ENCODE measurements at regions of chr6 and their contacts with region 1.

Region 1: DNA sequence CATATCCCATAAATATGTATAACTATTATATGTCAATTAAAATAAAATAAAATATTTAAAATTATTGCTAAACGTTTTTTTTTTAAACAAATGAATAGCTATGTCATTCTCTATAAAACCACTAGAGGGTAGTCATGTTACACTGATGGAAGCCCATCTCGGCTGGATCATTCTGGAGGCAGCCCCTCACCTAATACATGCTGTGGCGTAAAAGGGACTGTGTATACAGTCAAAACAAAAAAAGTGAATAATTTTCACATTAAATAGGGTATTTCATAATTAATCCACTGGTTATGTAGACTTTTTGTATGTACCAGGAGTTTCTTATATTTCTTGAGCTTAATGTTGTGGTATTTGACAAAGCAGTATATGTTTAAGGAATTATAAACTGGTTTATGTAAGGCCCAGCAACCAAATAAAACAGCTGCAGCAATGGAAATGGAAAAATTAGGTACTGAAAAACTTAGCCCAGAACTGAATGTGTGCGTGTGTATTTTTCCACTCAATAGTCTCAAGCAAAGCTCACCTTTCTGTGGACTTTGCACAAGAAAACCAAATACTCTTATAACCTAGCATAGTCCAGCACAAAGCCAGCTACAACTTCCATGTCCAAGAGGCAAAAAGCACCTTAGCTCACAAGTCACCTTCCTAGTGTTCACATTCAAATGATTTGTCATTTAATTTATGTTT is 81.7 kb downstream of the COL9A1 start:
- DNase-seq: no peak
- ATAC-seq: peak; percentile 71
- H3K4me3 ChIP-seq: no peak overlapping the region
- H3K27ac ChIP-seq: no peak overlapping the region
- H3K4me1 ChIP-seq: no peaks in the 10 kb centered on the region
- H3K27me3 ChIP-seq: peaks cover 52% of the 10 kb centered on the region
- CTCF ChIP-seq: peak; percentile 51 to 61 (median 55); a peak in 4 of 6 replicates
- POLR2A ChIP-seq: no peak
- RAD21 ChIP-seq: peak; percentile 75

Region 2: DNA sequence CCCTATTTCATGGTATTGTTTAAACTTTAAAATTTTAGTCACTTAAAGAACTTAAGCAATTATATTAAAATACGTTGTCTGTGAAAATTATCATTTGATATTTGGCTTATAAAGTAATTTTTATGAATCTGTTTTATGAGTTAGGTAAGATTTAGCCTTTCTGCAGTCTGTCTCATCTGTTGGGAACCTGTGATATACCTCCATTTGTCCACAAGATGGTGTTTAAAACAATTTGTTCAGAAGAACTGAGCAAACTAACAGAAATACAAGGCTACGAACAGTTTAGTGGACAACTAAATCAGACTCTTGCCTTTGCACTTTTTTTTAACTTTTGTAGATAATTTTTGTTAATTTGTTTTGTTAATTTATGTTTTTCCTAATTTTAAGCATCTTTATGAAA is 10.7 kb before region 1 on chr6:
- CTCF ChIA-PET with region 1: interaction called, 19 read pairs
- POLR2A ChIA-PET with region 1: no interaction called
- RAD21 ChIA-PET with region 1: no interaction called
- intact Hi-C with region 1: no loop called
- DNase-seq: no peak
- ATAC-seq: peak; percentile 59; the same call in 1 of the 2 replicates
- H3K4me3 ChIP-seq: no peak overlapping the region
- H3K27ac ChIP-seq: no peak overlapping the region
- H3K4me1 ChIP-seq: no peaks in the 10 kb centered on the region
- H3K27me3 ChIP-seq: peaks cover 71% of the 10 kb centered on the region
- CTCF ChIP-seq: peak; percentile 6 to 40 (median 21); a peak in 3 of 6 replicates
- POLR2A ChIP-seq: no peak
- RAD21 ChIP-seq: no peak

Region 3: DNA sequence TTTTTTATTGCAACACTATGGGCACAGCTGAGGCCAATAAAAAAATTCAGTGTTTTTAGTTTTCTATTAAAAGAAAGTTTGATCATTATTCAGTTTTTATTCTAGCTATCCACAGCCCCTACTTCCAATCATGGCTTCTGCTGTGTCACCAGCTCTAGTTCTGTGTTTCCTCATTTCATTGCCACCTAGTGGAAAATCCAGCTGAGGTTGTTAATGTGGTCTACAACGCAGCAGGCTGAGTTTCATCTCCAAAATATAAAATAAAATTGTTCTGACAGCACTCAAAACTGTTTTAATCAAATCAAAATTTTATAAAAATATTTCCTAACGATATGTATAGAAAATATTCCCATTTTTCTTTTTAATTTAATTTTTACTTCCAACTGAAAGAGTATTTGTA is 68.1 kb after region 1 on chr6:
- CTCF ChIA-PET with region 1: interaction called, 13 read pairs
- POLR2A ChIA-PET with region 1: no interaction called
- RAD21 ChIA-PET with region 1: no interaction called
- intact Hi-C with region 1: no loop called
- DNase-seq: no peak
- ATAC-seq: no peak
- H3K4me3 ChIP-seq: no peak overlapping the region
- H3K27ac ChIP-seq: no peak overlapping the region
- H3K4me1 ChIP-seq: no peaks in the 10 kb centered on the region
- H3K27me3 ChIP-seq: peaks cover 82% of the 10 kb centered on the region
- CTCF ChIP-seq: no peak; a peak in 1 of 6 replicates
- POLR2A ChIP-seq: no peak
- RAD21 ChIP-seq: 0 out of 2 replicates have a peak, but pooled peaks have one; percentile 9

Region 4: DNA sequence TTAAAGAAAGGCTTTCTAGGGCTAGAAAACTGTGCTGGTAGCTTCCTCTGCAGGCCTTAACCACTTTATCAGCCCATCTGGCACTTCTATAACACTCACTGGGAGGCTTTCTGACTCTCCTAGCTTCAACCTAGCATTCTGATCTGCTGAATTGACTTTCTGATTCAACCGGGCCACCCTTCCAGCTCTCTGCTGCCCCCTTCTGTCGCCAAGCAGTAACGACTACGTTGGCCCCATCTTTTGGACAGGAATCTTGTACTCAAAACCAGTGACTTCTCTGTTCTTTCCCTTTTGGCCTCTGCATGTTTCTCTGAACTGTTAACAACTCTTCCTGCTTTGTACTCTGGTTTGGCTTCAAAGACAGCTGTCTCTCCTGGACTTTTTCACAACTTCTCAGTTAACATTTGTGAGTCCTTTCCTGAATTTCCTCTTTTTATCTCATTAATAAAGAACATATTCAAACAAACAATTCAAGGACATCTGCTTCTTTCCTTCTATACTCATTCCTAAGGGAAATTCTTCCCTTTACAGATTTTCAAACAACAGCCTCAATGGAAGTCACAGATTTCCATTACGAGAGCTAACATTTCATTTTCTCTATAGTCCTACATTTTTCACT is 148.3 kb after region 1 on chr6:
- CTCF ChIA-PET with region 1: interaction called, 67 read pairs
- POLR2A ChIA-PET with region 1: interaction called, 3 read pairs
- RAD21 ChIA-PET with region 1: interaction called in 1 of 2 experiments, 3 read pairs
- intact Hi-C with region 1: loop called (anchors 1 kb)
- DNase-seq: peak; percentile 54
- ATAC-seq: peak; percentile 92
- H3K4me3 ChIP-seq: no peak overlapping the region
- H3K27ac ChIP-seq: no peak overlapping the region
- H3K4me1 ChIP-seq: peaks cover 0 to 2% of the 10 kb centered on the region in 2 experiments; a peak in 2 of 4 replicates
- H3K27me3 ChIP-seq: peaks cover 53% of the 10 kb centered on the region
- CTCF ChIP-seq: peak; percentile 77 to 93 (median 90); a peak in 5 of 6 replicates
- POLR2A ChIP-seq: no peak
- RAD21 ChIP-seq: peak; percentile 75

Region 5: DNA sequence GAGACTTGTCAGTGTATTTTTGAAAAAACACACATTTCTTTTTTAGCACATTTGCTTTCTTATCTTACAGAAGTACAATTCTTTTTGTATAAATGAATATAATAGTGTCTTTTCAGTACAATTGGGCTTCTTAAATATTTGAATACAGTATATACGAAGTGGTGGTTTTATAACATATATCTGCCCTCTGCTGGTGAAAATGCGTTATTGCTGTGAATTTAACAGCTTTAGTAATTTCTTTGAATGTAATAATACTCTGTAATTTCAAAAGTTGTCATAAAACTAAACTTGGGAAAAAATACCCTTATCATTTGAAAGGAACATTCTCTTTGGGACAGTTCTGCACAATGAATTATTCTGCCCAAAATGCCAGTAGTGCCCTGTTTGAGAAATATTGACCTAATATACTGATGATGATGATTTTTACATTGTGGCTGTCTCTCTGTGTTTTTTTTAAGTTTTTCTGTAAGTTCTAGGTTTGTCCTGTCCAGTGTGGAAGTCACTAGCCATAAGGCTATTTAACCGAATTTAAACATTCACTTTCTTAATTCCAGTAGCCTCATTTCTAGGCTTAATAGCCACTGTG is 465.5 kb after region 1 on chr6:
- CTCF ChIA-PET with region 1: interaction called, 12 read pairs
- POLR2A ChIA-PET with region 1: no interaction called
- RAD21 ChIA-PET with region 1: interaction called, 3 to 4 read pairs
- intact Hi-C with region 1: loop called (anchors 5 kb)
- DNase-seq: no peak
- ATAC-seq: peak; percentile 62; the same call in 1 of the 2 replicates
- H3K4me3 ChIP-seq: no peak overlapping the region
- H3K27ac ChIP-seq: no peak overlapping the region
- H3K4me1 ChIP-seq: peaks cover 0 to 4% of the 10 kb centered on the region in 2 experiments; a peak in 1 of 4 replicates
- H3K27me3 ChIP-seq: no peaks in the 10 kb centered on the region
- CTCF ChIP-seq: peak; percentile 45 to 78 (median 58); a peak in 4 of 6 replicates
- POLR2A ChIP-seq: no peak
- RAD21 ChIP-seq: peak; percentile 65

Region 6: GRCh38 chr6:70955441-70956190 is 734.4 kb after region 1 on chr6:
- CTCF ChIA-PET with region 1: interaction called, 30 read pairs
- POLR2A ChIA-PET with region 1: interaction called, 3 read pairs
- RAD21 ChIA-PET with region 1: interaction called, 5 to 8 read pairs
- intact Hi-C with region 1: loop called (anchors 5 kb)
- DNase-seq: peak; percentile 60
- ATAC-seq: peak; percentile 100
- H3K4me3 ChIP-seq: no peak overlapping the region
- H3K27ac ChIP-seq: no peak overlapping the region
- H3K4me1 ChIP-seq: peaks cover 3 to 5% of the 10 kb centered on the region in 2 experiments; a peak in 2 of 4 replicates
- H3K27me3 ChIP-seq: peaks cover 21% of the 10 kb centered on the region; the same call in 1 of the 2 replicates
- CTCF ChIP-seq: peak; percentile 63 to 85 (median 78)
- POLR2A ChIP-seq: no peak
- RAD21 ChIP-seq: peak; percentile 77

Region 7: DNA sequence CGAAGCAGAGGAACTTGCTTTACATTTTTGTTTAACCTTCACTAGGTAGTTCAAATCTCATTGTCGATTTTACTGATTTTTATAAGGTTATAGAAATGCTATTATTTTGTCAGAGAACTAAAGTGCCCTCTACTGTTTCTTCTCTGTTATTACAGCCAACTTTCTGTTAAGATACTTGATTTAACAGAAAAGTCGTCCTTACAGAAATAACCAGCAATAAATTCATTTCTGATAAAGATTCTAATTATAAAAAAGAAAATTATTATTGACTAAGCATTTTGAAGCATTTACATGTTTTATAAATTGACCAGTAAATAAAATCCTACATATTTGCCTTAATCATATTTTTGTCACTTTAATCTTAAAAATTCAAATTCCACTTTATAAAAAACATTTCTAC is 1128.2 kb after region 1 on chr6:
- CTCF ChIA-PET with region 1: no interaction called
- POLR2A ChIA-PET with region 1: no interaction called
- RAD21 ChIA-PET with region 1: no interaction called
- intact Hi-C with region 1: loop called (anchors 10 kb)
- DNase-seq: peak; percentile 16
- ATAC-seq: no peak
- H3K4me3 ChIP-seq: no peak overlapping the region
- H3K27ac ChIP-seq: no peak overlapping the region
- H3K4me1 ChIP-seq: no peaks in the 10 kb centered on the region
- H3K27me3 ChIP-seq: peaks cover 12% of the 10 kb centered on the region; the same call in 1 of the 2 replicates
- CTCF ChIP-seq: peak; percentile 49 to 65 (median 51); a peak in 5 of 6 replicates
- POLR2A ChIP-seq: no peak
- RAD21 ChIP-seq: peak; percentile 61